Activated CD8-positive, alpha-beta T cell treated with anti-CD3 and anti-CD28 coated beads, Interleukin-2, amount 10 ng/mL, durations not matched to agents 7 days and 5 days (primary cell): ENCODE measurements at regions of chr3 and their contacts with region 1.

Region 1: GRCh38 chr3:111978493-111979433 is at the start of gene ABHD10:
- DNase-seq: peak; percentile 98
- ATAC-seq: peak; percentile 98
- H3K4me3 Mint-ChIP-seq: peak within 1 kb of the TSS; percentile 91
- H3K27ac Mint-ChIP-seq: peak within 1 kb of the TSS; percentile 95
- H3K4me1 Mint-ChIP-seq: peaks cover 28% of the 10 kb centered on the region
- H3K27me3 Mint-ChIP-seq: peaks cover 6% of the 10 kb centered on the region
- total RNA-seq, gene ABHD10: 36.3 to 43.7 TPM

Region 2: GRCh38 chr3:111859974-111860859 is 118.5 kb before region 1 on chr3:
- CTCF ChIA-PET with region 1: interaction called, 11 read pairs
- POLR2A ChIA-PET with region 1: interaction called, 4 read pairs
- DNase-seq: peak; percentile 78
- ATAC-seq: peak; percentile 73
- H3K4me3 Mint-ChIP-seq: peak overlapping the region; percentile 86
- H3K27ac Mint-ChIP-seq: peak overlapping the region; percentile 77
- H3K4me1 Mint-ChIP-seq: peaks cover 11% of the 10 kb centered on the region
- H3K27me3 Mint-ChIP-seq: peaks cover 45% of the 10 kb centered on the region

Region 3: DNA sequence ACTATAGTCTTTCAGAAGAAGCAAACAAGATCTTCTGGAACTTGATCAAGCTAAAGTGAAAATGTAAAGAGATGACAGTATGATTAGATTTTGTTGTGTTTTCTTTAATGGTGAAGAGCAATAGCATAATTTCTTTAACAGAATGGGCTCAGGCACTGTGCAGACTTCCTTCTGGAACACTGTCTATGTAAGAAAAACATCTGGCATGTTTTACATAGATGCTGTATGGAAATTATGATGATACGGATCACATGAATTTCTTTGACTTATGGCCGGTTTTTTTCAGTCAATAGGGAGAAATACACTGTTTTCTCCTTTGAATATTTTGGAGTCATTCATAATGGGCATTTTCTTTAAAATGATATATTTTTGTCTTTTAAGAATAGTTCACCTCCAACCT is 77.1 kb before region 1 on chr3:
- CTCF ChIA-PET with region 1: no interaction called
- POLR2A ChIA-PET with region 1: no interaction called
- DNase-seq: no peak
- ATAC-seq: no peak
- H3K4me3 Mint-ChIP-seq: no peak overlapping the region
- H3K27ac Mint-ChIP-seq: no peak overlapping the region
- H3K4me1 Mint-ChIP-seq: peaks cover 11% of the 10 kb centered on the region
- H3K27me3 Mint-ChIP-seq: no peaks in the 10 kb centered on the region

Region 4: GRCh38 chr3:111936191-111936841 is 42.4 kb before region 1 on chr3:
- CTCF ChIA-PET with region 1: no interaction called
- POLR2A ChIA-PET with region 1: no interaction called
- DNase-seq: no peak
- ATAC-seq: no peak
- H3K4me3 Mint-ChIP-seq: no peak overlapping the region
- H3K27ac Mint-ChIP-seq: no peak overlapping the region
- H3K4me1 Mint-ChIP-seq: no peaks in the 10 kb centered on the region
- H3K27me3 Mint-ChIP-seq: no peaks in the 10 kb centered on the region

Region 5: DNA sequence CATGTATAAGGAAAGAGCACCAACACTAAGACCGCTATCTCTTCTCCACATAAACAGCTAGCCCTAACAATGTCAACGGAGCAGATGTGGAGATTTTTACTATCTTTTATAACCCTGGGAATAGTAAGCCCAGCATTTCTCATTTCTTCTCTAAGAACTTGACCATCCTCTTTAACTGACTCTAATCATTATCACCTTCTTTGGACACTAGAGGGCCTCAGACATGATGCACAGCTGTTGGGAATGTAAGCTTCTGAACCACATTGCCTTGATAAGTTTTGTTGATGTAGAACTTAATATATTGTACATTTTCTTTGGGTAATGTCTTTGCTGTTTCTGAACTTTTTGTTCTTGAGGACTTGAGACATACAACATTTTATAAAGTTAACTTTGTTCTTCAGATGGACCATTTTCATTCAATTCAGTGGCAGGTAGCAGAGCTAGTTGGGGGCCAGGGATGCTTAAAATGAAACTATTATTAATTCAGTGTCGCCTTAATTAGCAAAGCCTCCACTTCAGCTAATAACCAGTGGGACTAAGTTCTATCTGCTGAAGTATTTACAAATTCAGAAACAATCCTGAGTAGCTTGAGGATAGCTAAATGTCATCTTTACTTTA is 10.4 kb after region 1 on chr3:
- CTCF ChIA-PET with region 1: interaction called, 40 read pairs
- POLR2A ChIA-PET with region 1: interaction called, 9 read pairs
- DNase-seq: no peak
- ATAC-seq: peak; percentile 88
- H3K4me3 Mint-ChIP-seq: no peak overlapping the region
- H3K27ac Mint-ChIP-seq: no peak overlapping the region
- H3K4me1 Mint-ChIP-seq: peaks cover 28% of the 10 kb centered on the region
- H3K27me3 Mint-ChIP-seq: no peaks in the 10 kb centered on the region

Region 6: DNA sequence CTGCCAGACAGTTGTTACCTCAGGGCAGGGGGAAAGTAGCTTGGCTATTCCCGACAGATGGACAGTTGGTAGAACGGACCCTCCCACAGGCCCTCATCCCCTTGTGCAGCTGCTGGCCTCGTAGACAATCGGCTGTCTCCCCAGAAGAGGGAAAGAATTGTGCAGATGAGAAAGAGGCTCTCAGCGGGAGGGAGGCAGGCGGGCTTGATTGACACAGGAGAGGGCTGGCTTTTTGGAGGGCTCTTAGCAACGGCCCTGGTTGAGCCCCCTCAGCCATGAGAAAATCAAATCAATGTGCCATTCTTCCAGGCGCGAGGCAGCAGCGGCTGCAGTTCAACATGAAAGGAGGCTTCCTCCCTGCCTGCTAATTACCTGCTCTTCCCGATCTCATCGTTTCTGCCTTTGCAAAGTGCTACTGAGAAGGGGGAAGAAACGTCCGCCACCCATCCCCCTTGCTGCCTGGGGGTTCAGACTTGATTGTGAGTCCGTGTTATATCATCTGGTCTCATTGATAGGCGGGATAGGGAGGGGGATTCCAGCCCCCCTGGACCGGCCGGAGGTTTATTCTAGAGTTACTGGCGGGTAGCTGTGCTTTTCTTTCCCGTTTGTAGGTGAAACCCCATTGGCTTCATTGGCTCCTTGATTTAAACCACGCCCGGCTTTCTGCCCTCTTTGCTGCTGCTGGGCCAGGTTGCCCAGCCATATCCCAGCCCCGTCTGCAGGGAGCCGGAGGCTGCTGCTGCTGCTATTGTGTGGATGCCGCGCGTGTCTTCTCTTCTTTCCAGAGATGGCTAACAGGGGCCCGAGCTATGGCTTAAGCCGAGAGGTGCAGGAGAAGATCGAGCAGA is 20.1 kb after region 1 on chr3 and contains the start of gene TAGLN3:
- CTCF ChIA-PET with region 1: interaction called, 4 read pairs
- POLR2A ChIA-PET with region 1: interaction called, 25 read pairs
- DNase-seq: no peak
- ATAC-seq: peak; percentile 46
- H3K4me3 Mint-ChIP-seq: peak within 1 kb of the TSS; percentile 69
- H3K27ac Mint-ChIP-seq: no peak within 1 kb of the TSS
- H3K4me1 Mint-ChIP-seq: peaks cover 35% of the 10 kb centered on the region
- H3K27me3 Mint-ChIP-seq: no peaks in the 10 kb centered on the region
- total RNA-seq, gene TAGLN3: not detected

Region 7: DNA sequence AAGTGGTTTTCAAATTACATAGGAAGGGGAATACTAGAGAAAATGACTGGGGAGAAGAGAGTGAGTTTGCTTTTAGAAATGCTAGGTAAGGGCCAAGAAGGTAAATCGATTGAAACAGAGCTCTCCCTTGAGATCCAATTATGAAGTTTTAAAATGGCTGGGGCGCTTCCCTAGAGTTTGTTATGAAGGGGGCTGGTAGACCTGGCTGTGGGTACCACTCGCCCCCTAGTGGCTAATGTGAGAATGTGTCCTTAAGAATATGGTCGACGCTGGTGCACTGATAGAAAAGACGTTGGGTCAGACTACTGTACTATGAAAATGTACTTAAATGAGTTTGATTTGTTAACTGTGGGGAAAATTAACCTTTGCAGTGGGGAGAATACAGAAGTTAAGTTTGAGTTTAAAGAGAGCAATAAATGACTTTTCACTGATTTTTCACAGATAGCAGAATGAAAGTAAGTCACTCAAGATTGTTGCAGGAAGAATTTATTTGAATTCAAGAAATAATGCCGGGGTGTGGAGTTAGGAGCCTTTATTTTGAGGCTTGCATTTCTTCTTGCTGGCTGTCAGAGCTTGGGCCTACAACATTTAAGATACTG is 64.9 kb after region 1 on chr3:
- CTCF ChIA-PET with region 1: interaction called, 14 read pairs
- POLR2A ChIA-PET with region 1: no interaction called
- DNase-seq: peak; percentile 70
- ATAC-seq: peak; percentile 93
- H3K4me3 Mint-ChIP-seq: no peak overlapping the region
- H3K27ac Mint-ChIP-seq: no peak overlapping the region
- H3K4me1 Mint-ChIP-seq: peaks cover 3% of the 10 kb centered on the region
- H3K27me3 Mint-ChIP-seq: peaks cover 1% of the 10 kb centered on the region

Region 8: DNA sequence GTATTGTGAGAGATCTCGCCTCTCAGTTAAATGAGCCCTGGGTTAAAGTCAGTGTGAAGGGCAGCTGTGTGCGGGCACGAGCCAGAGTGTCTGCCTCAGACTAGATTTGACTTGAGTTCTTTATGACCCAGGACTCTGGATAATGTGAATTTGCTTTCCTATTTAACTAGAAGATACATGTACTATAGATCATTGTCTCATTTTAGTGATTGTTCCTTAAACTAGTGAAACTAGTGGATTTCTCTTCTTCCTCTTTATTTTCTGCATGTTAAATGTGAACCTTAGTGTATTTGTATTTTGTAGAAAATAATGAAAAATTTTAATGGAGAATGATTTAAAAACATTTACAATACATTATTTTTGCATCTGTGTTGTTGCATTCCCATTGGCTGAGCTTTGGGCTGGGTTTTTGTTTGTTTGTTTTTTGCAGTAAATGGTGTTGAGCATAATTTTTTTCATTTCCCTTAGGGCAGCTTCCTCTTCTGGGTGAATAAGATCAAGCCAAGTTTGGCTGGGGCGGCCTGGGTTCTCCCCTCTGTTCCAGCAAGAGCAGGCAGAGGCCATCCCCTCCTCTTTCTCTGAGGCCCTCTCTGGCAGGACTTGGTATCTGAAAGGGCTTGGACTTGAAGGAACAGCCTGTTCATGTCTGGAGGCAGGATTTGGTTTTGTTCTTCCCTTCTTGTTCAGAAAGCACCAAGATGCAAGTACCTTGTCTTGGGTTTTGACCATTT is 139.2 kb after region 1 on chr3:
- CTCF ChIA-PET with region 1: no interaction called
- POLR2A ChIA-PET with region 1: no interaction called
- DNase-seq: no peak
- ATAC-seq: no peak
- H3K4me3 Mint-ChIP-seq: no peak overlapping the region
- H3K27ac Mint-ChIP-seq: no peak overlapping the region
- H3K4me1 Mint-ChIP-seq: peaks cover 37% of the 10 kb centered on the region
- H3K27me3 Mint-ChIP-seq: no peaks in the 10 kb centered on the region